Activated T-helper 1 cell treated with anti-CD3 and anti-CD28 coated beads, Interleukin-12 subunit alpha, Interleukin-12 subunit beta, Interleukin-2, Interleukin-4 antibody, amounts not matched to agents 30 ng/mL and 10 ng/mL and 1 ng/mL, durations not matched to agents 14 hours and 24 hours and 36 hours (primary cell): ENCODE measurements at regions of chr1 and their contacts with region 1.

Region 1: GRCh38 chr1:40818264-40818961 is 34.8 kb downstream of the KCNQ4 start:
- DNase-seq: peak; percentile 89
- H3K4me3 Mint-ChIP-seq: peak overlapping the region; percentile 66
- H3K27ac Mint-ChIP-seq: peak overlapping the region; percentile 52
- H3K4me1 Mint-ChIP-seq: peaks cover 4% of the 10 kb centered on the region
- H3K27me3 Mint-ChIP-seq: peaks cover 9% of the 10 kb centered on the region

Region 2: GRCh38 chr1:40862008-40862863 is 43.8 kb after region 1 on chr1 and contains the start of gene CITED4:
- intact Hi-C with region 1: loop called (anchors 2 kb)
- DNase-seq: peak; percentile 95
- H3K4me3 Mint-ChIP-seq: peak within 1 kb of the TSS; percentile 92
- H3K27ac Mint-ChIP-seq: peak within 1 kb of the TSS; percentile 97
- H3K4me1 Mint-ChIP-seq: peaks cover 24% of the 10 kb centered on the region
- H3K27me3 Mint-ChIP-seq: peaks cover 35% of the 10 kb centered on the region
- total RNA-seq, gene CITED4: 4.1 and 5.0 TPM in 2 replicates

Region 3: DNA sequence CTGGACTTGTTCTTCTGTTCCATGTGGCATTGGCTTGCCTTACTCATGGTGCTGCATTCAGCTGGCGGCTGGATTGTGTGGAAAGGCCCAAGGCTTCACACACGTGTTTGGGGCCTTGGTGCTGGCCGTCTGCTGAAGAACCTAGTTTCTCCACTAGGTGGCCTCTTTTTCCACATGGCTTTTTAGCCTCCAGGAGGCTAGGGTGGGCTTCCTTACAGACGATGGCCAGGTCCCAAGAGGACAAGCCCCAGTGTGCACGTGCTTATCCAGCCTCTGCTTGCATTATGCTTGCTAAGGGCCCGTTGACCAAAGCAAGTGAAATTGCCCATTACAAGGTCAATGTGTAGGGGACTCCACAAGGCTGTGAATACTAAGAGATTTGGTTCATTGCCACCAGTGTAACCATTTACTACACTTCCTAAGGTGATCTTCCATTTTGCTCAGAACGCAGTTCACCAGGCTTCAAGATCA is 495.3 kb after region 1 on chr1:
- intact Hi-C with region 1: no loop called
- DNase-seq: no peak
- H3K4me3 Mint-ChIP-seq: no peak overlapping the region
- H3K27ac Mint-ChIP-seq: no peak overlapping the region
- H3K4me1 Mint-ChIP-seq: peaks cover 5% of the 10 kb centered on the region
- H3K27me3 Mint-ChIP-seq: peaks cover 5% of the 10 kb centered on the region